Endothelial cell of umbilical vein (primary cell): ENCODE measurements at regions of chr15 and their contacts with region 1.

Region 1: GRCh38 chr15:69058830-69059556 is 44.5 kb downstream of the NOX5 start:
- DNase-seq: peak; percentile 78
- H3K4me3 ChIP-seq: no peak overlapping the region
- H3K27ac ChIP-seq: no peak overlapping the region
- H3K4me1 ChIP-seq: peaks cover 12% of the 10 kb centered on the region
- H3K27me3 ChIP-seq: peaks cover 0 to 6% of the 10 kb centered on the region in 2 experiments
- CTCF ChIP-seq: peak; percentile 83 to 94
- POLR2A ChIP-seq: no peak

Region 2: DNA sequence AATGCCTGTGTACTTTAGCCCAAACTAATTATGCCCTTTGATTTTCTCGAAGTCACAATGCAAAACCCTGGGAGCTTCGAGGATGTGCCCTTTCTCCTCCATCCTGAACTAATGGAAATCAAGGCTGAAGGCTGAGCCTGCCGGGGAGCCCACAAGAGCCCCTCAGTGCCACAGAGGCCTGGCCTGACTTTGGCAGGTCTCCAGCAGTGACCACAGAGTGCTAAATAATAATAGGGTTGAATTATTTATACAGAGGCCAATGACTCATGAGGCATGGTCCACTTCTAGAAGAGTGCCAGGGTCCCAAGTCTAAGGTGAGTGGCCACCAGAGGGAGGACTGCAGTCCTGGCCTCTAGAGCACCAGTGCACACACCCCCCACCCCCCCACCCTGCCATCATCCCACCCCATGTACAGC is 82.3 kb after region 1 on chr15:
- CTCF ChIA-PET with region 1: interaction called, 5 read pairs
- POLR2A ChIA-PET with region 1: no interaction called
- dilution Hi-C with region 1: no loop called
- intact Hi-C with region 1: loop called (anchors 1 kb)
- DNase-seq: peak; percentile 56
- H3K4me3 ChIP-seq: no peak overlapping the region
- H3K27ac ChIP-seq: no peak overlapping the region
- H3K4me1 ChIP-seq: peaks cover 5% of the 10 kb centered on the region
- H3K27me3 ChIP-seq: peaks cover 0 to 3% of the 10 kb centered on the region in 2 experiments
- CTCF ChIP-seq: peak in 1 of 2 donors; percentile 34
- POLR2A ChIP-seq: no peak

Region 3: GRCh38 chr15:69160141-69160993 is 101.4 kb after region 1 on chr15 and contains the start of gene GLCE:
- CTCF ChIA-PET with region 1: interaction called, 25 read pairs
- POLR2A ChIA-PET with region 1: no interaction called
- dilution Hi-C with region 1: no loop called
- intact Hi-C with region 1: loop called (anchors 1 kb)
- DNase-seq: peak; percentile 98
- H3K4me3 ChIP-seq: peak within 1 kb of the TSS; percentile 91 to 99 (median 96)
- H3K27ac ChIP-seq: peak within 1 kb of the TSS; percentile 78
- H3K4me1 ChIP-seq: peaks cover 46% of the 10 kb centered on the region
- H3K27me3 ChIP-seq: no peaks in the 10 kb centered on the region
- CTCF ChIP-seq: no peak
- POLR2A ChIP-seq: peak; percentile 95
- total RNA-seq, gene GLCE: 79.8 and 86.6 TPM in 2 replicates

Region 4: DNA sequence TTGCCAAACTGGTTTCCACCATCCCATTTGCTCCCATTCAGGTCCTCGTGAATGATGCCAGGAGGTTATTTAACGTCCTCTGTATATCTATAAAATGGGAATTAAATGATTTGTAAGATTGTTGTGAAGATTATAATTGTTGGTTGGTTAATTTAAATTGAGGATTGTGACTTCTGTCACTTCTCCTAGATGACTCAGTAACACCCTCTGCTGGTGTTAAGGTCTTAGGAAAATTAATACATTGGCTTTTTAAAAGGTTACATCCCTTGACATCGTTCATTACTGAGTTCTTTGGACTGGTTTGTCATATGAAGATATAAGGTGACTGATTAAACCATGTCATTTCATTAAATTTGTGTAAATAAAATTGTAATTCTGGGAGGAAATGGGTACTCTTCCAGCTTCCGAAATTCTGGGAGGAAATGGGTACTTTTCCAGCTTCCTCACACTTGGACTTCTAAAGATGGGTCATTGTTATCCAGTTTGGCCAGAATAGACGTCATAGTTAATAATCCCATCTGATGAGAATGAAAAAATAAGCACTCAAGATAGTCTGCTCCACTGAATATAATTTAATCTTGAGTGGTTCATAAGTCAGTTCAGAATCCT is 206.5 kb after region 1 on chr15:
- CTCF ChIA-PET with region 1: interaction called, 30 read pairs
- POLR2A ChIA-PET with region 1: no interaction called
- dilution Hi-C with region 1: no loop called
- intact Hi-C with region 1: loop called (anchors 1 kb)
- DNase-seq: peak; percentile 46
- H3K4me3 ChIP-seq: no peak overlapping the region
- H3K27ac ChIP-seq: no peak overlapping the region
- H3K4me1 ChIP-seq: no peaks in the 10 kb centered on the region
- H3K27me3 ChIP-seq: no peaks in the 10 kb centered on the region
- CTCF ChIP-seq: peak; percentile 22 to 33
- POLR2A ChIP-seq: no peak

Region 5: GRCh38 chr15:69413822-69414700 is 355.1 kb after region 1 on chr15 and contains the start of gene KIF23:
- CTCF ChIA-PET with region 1: interaction called, 5 read pairs
- POLR2A ChIA-PET with region 1: no interaction called
- dilution Hi-C with region 1: no loop called
- intact Hi-C with region 1: loop called (anchors 1 kb)
- DNase-seq: peak; percentile 93
- H3K4me3 ChIP-seq: peak within 1 kb of the TSS; percentile 93 to 94 (median 93)
- H3K27ac ChIP-seq: peak within 1 kb of the TSS; percentile 54
- H3K4me1 ChIP-seq: peaks cover 17% of the 10 kb centered on the region
- H3K27me3 ChIP-seq: no peaks in the 10 kb centered on the region
- CTCF ChIP-seq: no peak
- POLR2A ChIP-seq: peak; percentile 40
- total RNA-seq, gene KIF23: 55.7 and 64.7 TPM in 2 replicates